AG04449 (cell line): ENCODE measurements at regions of chr16 and their contacts with region 1.

Region 1: DNA sequence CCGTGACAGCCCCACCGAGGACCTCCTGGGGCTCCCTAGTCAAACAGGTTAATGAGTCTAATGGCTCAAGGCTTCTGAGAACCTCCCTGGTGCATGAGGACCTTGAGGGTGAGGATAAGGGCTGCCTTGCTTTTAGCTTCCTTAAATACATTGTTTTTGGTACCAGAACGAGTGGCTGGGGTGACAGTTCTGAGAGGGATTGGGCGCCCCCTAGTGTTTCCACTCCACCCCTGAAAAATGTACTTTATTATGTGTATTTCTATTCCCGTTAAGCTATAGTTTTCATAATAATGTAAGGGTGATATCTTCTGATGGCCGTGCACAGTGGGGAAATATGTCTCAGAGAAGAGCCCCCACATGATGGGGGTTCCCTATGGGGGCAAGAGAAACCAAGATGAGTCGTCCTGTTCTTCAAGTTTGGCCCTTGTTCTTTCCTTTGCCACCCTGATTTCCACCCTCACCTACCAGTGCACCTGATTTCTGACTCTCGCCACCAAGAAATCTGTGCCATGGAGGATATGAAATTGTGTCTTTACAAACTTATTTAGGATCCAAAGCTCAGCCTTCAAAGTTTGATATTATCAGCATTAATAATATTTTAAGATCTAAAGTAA is 14.5 kb upstream of the VWA3A start:
- DNase-seq: no peak
- H3K4me3 ChIP-seq: no peak overlapping the region
- CTCF ChIP-seq: peak; percentile 72

Region 2: GRCh38 chr16:21684199-21684598 is 393.6 kb before region 1 on chr16:
- CTCF ChIA-PET with region 1: no interaction called
- POLR2A ChIA-PET with region 1: no interaction called
- DNase-seq: no peak
- H3K4me3 ChIP-seq: no peak overlapping the region
- CTCF ChIP-seq: peak; percentile 13

Region 3: DNA sequence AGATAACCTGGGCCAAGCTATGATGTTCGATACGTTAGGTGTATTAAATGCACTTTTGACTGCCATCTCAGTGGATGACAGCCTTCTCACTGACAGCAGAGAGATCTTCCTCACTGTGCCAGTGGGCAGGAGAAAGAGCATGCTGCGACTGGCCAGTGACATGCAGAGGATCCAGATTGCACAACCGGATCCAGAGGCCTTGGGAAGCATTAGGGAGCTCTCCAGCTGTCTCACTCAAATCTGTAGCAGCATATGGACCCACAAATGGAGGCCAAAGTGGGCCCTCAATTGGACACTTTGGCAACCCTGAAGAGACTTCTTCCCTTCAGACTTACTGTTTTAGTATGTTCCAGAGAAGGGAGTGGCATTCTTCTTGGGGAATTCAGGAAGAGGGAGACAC is 97.8 kb before region 1 on chr16:
- CTCF ChIA-PET with region 1: interaction called, 13 read pairs
- POLR2A ChIA-PET with region 1: no interaction called
- DNase-seq: no peak
- H3K4me3 ChIP-seq: no peak overlapping the region
- CTCF ChIP-seq: no peak

Region 4: DNA sequence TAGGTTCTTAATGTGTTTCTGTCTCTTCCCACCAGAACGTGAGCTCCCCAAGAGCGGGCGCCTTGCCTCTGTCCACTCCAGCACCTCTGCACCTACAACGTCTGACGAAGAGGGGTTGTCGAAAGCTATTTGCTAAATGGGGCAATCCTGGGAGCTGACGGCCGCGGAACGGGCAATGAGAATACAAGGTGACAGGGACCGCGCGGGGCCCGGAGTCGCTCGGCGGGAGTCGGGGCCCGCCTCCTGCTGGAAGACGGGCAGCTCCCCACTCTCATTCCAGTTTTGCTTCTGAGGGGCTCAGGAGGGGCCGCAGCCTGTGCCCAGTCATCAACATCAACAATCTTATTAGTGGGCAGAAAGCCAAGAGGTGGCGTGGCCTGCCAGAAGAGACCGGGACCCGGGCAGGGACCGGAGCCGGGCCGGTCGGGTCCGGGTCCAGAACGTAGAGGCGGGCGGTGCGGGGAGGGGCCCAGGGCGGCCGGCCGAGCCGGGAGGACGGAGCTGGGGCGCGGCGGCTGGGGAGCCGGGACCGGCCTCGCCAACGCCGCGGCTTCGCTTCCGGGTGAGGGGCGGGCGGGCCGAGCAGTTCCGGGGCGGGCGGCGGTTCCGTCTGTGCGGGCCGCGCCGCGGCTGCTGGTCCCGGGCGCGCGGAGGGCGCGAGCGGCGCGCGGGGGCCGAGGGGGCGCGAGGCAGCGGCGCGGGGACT is 70.1 kb before region 1 on chr16 and contains the start of gene MOSMO:
- CTCF ChIA-PET with region 1: interaction called, 292 read pairs
- POLR2A ChIA-PET with region 1: no interaction called
- DNase-seq: no peak
- H3K4me3 ChIP-seq: peak within 1 kb of the TSS; percentile 80
- CTCF ChIP-seq: no peak

Region 5: DNA sequence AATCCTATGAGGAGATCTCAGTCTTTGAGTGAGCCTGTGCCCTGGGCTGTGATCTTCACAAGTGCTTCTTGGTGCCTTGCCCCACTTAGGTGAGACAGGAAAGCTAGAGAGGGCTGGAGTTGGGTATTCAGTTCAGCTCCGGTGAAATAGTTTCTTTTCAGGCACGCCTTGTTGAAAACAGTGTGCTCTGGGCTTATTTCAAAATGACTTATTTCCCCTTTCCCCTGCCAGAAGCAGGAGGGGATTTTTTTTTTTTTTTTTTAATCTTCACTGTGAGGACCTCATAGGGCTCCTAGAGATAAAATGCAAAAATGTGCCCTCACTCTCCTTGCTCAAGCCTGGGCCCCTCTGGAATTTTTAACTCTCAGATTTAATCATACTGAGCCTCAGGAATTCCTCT is 42.7 kb before region 1 on chr16:
- CTCF ChIA-PET with region 1: interaction called, 22 read pairs
- POLR2A ChIA-PET with region 1: no interaction called
- DNase-seq: no peak
- H3K4me3 ChIP-seq: no peak overlapping the region
- CTCF ChIP-seq: no peak

Region 6: DNA sequence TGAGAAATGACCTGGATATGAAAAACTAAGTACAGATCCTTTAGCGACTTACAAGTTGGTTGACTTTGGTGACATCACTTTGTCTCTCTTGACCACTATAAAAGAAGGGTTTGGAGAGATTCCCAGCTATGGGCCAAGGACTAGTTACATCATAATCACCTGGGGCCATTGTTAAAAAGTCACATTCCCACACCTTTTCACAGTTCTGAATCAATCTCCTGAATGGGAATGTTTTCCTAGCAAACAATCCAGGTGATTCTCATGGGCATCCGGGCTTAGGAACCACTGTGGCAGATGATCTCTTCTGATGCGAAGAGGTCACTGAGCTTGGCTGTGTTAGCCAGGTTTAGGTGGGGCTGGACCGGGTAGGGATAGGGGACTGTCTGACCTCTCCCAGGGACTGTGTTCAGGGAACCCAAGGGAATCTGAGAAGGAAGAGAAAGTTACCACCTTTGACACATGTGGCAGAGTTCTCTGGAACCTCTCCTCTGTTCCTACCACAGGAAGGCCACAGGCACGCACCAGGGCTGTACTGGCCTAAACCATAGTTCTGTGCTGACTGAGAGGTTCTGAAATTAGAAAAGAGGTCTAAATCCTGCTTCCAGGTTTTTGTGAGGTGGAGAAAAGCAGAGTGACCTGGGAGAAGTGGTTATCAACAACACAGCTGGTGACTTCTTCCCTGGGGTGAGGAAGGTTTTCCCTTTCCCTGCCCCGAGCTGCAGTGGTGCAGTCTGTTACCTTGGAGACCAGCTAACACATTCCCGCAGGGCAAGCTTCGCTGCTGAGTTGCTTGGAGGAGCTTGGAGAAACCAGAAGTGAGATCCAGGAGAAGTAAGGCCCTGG is 14.2 kb after region 1 on chr16 and contains the start of gene VWA3A:
- CTCF ChIA-PET with region 1: interaction called, 87 read pairs
- POLR2A ChIA-PET with region 1: no interaction called
- DNase-seq: peak; percentile 33
- H3K4me3 ChIP-seq: no peak within 1 kb of the TSS
- CTCF ChIP-seq: no peak

Region 7: GRCh38 chr16:22424161-22424937 is 346.5 kb after region 1 on chr16:
- CTCF ChIA-PET with region 1: no interaction called
- POLR2A ChIA-PET with region 1: no interaction called
- DNase-seq: no peak
- H3K4me3 ChIP-seq: peak overlapping the region; percentile 30
- CTCF ChIP-seq: no peak